Activated naive CD8-positive, alpha-beta T cell treated with anti-CD3 and anti-CD28 coated beads, Interleukin-2, amount 10 ng/mL, durations not matched to agents 7 days and 5 days (primary cell): ENCODE measurements at regions of chr2 and their contacts with region 1.

Region 1: GRCh38 chr2:96174251-96175144 is 29.3 kb upstream of the DUSP2 start:
- DNase-seq: peak; percentile 85
- ATAC-seq: peak; percentile 95
- H3K4me3 Mint-ChIP-seq: no peak overlapping the region
- H3K27ac Mint-ChIP-seq: peak overlapping the region; percentile 18
- H3K4me1 Mint-ChIP-seq: peaks cover 7% of the 10 kb centered on the region
- H3K27me3 Mint-ChIP-seq: no peaks in the 10 kb centered on the region

Region 2: DNA sequence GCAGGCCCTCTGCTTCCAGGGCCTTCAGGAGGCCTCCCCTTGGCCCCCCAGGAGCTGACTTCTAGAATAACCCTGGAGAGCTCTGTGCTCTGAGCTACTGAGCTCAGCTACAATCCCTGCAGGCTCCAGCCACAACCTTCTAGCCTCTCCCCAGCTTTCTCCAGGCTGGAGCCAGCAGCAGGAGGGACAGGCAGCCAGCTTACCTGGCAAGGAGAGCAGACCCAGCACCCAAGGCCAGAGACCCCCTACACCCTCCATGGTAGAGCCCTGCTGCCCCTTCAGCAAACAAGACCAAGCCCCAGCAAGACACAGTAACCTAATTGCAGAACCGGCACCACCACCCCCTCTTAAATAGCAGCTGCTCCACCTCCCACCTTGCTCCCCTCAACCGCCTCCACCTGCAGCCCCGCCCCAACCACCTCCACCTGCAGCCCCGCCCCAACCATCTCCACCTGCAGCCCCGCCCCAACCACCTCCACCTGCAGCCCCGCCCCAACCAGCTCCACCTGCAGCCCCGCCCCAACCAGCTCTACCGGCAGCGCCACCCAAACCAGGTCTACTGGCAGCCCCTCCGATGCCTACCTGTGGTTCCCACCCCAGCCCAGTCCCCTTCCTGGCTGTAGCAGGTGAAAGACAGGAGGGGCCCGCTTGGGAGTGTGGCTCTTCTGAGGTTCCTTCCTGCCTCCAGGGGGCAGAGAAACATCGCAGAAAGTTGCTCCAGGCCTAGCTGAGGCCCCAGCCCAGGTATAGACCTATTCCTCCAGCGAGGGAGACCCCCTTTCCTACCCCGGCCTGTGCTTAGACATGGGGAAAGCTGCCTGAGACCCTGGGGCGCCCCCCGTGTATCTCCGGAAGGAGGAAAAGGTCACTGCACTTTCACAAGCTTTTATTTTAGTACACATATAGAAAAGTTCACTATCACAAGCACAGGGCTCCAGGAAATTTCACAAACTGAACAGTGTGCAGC is 36.0 kb before region 1 on chr2 and contains the start of gene ASTL:
- POLR2A ChIA-PET with region 1: interaction called, 63 read pairs
- DNase-seq: no peak
- ATAC-seq: peak; percentile 55
- H3K4me3 Mint-ChIP-seq: no peak within 1 kb of the TSS
- H3K27ac Mint-ChIP-seq: peak within 1 kb of the TSS; percentile 30
- H3K4me1 Mint-ChIP-seq: peaks cover 6% of the 10 kb centered on the region
- H3K27me3 Mint-ChIP-seq: no peaks in the 10 kb centered on the region
- total RNA-seq, gene ASTL: 12.2 to 14.7 TPM